Panc1 (cell line): ENCODE measurements at regions of chr7 and their contacts with region 1.

Region 1: DNA sequence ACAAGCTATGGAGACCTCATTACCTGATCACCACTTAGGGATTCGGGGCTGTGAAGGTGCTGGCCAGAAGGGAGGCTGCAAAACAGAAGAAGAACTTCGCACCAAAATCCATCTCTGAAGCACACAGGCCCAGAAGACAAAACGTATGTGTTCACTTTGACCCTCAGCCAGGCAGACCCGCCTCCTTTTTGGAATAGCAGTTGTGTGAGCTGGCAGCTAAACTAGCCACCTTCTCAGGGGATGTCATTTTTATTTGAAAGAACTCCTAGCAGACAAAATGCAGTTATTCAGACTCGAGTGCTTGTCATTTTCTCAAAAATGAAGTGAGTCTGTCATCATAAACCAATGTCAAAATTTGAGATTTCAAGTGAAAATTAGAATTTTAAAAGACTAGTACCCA is 71.7 kb downstream of the TNS3 start:
- DNase-seq: no peak
- ATAC-seq: no peak
- H3K4me3 ChIP-seq: no peak overlapping the region
- H3K27ac ChIP-seq: peak overlapping the region; percentile 91
- H3K4me1 ChIP-seq: peaks cover 97% of the 10 kb centered on the region
- H3K27me3 ChIP-seq: no peaks in the 10 kb centered on the region
- CTCF ChIP-seq: no peak

Region 2: DNA sequence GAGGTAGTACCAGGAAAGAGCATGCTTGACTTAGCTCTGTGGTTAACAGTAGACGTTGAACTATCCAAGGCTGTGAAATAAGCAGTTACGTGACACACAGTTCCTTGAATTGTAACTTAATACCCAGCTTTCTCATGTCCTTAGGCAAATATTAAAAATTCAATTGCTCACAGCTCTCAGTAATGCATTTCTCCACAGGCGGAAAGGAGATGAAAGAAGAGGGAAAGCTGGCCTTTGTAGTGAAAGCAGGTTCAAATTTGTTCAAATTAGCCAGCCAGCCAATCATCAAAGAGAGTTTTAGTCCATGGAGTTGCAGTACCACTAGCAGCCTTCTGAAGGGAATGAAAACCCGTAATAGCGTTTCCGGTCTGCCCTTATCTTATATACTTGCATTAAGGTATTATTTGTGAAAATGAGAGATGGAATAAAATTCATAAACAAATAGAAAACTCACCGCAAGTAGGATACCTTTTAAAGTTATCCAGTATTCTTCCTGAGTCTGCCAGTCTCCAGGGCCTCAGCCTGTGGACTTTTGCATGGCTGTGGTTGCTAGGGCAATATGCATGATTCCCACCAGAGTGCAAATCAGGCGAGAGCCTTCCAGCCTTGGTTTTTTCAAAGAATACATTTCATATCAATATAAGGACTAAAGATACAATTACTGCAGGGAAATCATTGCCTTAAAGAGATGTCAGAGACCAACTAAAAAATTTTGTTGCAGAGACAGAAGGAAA is 723.8 kb before region 1 on chr7:
- CTCF ChIA-PET with region 1: no interaction called
- POLR2A ChIA-PET with region 1: no interaction called
- in situ Hi-C with region 1: no loop called
- intact Hi-C with region 1: no loop called
- DNase-seq: peak; percentile 74
- ATAC-seq: peak; percentile 81
- H3K4me3 ChIP-seq: peak overlapping the region in 1 of 2 experiments; percentile 9; a peak in 1 of 4 replicates
- H3K27ac ChIP-seq: 0 out of 2 replicates have a peak overlapping the region, but pooled peaks have one; percentile 3
- H3K4me1 ChIP-seq: no peaks in the 10 kb centered on the region
- H3K27me3 ChIP-seq: no peaks in the 10 kb centered on the region
- CTCF ChIP-seq: peak; percentile 12; the same call in 1 of the 2 replicates

Region 3: GRCh38 chr7:47520406-47520805 is 10.2 kb after region 1 on chr7:
- CTCF ChIA-PET with region 1: no interaction called
- POLR2A ChIA-PET with region 1: no interaction called
- in situ Hi-C with region 1: no loop called
- intact Hi-C with region 1: no loop called
- DNase-seq: no peak
- ATAC-seq: no peak
- H3K4me3 ChIP-seq: no peak overlapping the region
- H3K27ac ChIP-seq: peak overlapping the region; percentile 86
- H3K4me1 ChIP-seq: peaks cover 91% of the 10 kb centered on the region
- H3K27me3 ChIP-seq: no peaks in the 10 kb centered on the region
- CTCF ChIP-seq: no peak

Region 4: DNA sequence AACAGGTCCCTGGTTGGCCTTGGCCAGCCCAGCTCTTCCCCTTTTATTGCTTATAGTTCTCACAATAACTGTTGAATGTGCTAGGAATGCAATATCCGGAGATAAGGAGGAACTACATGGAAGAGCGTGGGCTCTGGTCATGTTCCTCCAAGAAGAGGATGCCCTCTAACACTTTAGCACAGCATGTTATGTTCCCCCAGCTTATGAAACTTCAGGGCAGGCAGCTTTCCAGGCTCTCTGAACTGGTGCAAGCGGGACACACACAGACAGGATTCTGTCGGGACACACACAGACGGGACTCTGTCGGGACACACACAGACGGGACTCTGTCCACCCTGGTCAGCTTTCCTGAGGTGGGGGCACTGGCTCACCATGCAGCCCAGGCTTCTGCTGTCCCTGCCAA is 296.5 kb after region 1 on chr7:
- CTCF ChIA-PET with region 1: no interaction called
- POLR2A ChIA-PET with region 1: interaction called, 17 read pairs
- in situ Hi-C with region 1: no loop called
- intact Hi-C with region 1: no loop called
- DNase-seq: no peak
- ATAC-seq: peak; percentile 42
- H3K4me3 ChIP-seq: no peak overlapping the region
- H3K27ac ChIP-seq: peak overlapping the region; percentile 95
- H3K4me1 ChIP-seq: peaks cover 70% of the 10 kb centered on the region
- H3K27me3 ChIP-seq: no peaks in the 10 kb centered on the region
- CTCF ChIP-seq: no peak